AG04450 (cell line): ENCODE measurements at regions of chr5 and their contacts with region 1.

Region 1: DNA sequence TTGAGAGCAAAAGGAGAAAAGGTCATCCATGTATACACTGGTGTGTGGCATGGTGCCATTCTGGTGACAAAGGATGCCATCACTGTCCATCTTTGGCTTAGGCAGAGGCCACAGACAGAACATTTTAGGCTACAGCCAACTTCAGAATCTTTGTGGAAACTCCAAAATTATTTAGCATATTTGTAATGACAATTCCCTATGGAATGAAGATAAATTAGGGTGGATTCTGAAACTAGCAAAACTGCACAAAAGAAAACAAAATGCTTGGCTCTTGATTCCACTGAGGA is 92.5 kb downstream of the FBXW11 start:
- DNase-seq: no peak
- H3K4me3 ChIP-seq: no peak overlapping the region
- H3K27ac ChIP-seq: no peak overlapping the region
- H3K27me3 ChIP-seq: no peaks in the 10 kb centered on the region
- CTCF ChIP-seq: no peak

Region 2: GRCh38 chr5:171630027-171630669 is 283.8 kb before region 1 on chr5:
- CTCF ChIA-PET with region 1: interaction called, 24 read pairs
- POLR2A ChIA-PET with region 1: no interaction called
- DNase-seq: peak; percentile 11
- H3K4me3 ChIP-seq: peak overlapping the region; percentile 33
- H3K27ac ChIP-seq: no peak overlapping the region
- H3K27me3 ChIP-seq: peaks cover 41% of the 10 kb centered on the region
- CTCF ChIP-seq: peak; percentile 69

Region 3: DNA sequence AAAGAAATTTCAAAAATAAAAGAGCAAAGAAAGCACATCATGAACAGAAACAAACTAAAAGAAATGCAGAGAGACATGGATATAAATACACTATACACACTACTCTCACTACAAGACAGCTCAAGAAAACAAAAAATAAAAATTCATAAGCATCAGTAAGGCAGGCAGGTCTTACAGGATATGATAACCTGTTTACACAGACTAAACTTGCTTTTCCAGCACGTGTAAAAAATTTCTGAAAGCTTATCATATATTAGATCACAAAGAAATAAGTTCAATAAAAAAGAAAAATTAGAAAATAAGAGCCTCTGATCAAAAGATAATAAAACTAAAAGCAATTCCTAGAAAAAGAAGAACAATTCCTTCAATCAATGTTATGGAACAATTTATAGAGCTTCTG is 22.6 kb after region 1 on chr5:
- CTCF ChIA-PET with region 1: interaction called, 10 read pairs
- POLR2A ChIA-PET with region 1: no interaction called
- DNase-seq: no peak
- H3K4me3 ChIP-seq: no peak overlapping the region
- H3K27ac ChIP-seq: no peak overlapping the region
- H3K27me3 ChIP-seq: no peaks in the 10 kb centered on the region
- CTCF ChIP-seq: no peak

Region 4: GRCh38 chr5:172044631-172045314 is 130.8 kb after region 1 on chr5:
- CTCF ChIA-PET with region 1: interaction called, 53 read pairs
- POLR2A ChIA-PET with region 1: no interaction called
- DNase-seq: no peak
- H3K4me3 ChIP-seq: no peak overlapping the region
- H3K27ac ChIP-seq: no peak overlapping the region
- H3K27me3 ChIP-seq: no peaks in the 10 kb centered on the region
- CTCF ChIP-seq: no peak

Region 5: DNA sequence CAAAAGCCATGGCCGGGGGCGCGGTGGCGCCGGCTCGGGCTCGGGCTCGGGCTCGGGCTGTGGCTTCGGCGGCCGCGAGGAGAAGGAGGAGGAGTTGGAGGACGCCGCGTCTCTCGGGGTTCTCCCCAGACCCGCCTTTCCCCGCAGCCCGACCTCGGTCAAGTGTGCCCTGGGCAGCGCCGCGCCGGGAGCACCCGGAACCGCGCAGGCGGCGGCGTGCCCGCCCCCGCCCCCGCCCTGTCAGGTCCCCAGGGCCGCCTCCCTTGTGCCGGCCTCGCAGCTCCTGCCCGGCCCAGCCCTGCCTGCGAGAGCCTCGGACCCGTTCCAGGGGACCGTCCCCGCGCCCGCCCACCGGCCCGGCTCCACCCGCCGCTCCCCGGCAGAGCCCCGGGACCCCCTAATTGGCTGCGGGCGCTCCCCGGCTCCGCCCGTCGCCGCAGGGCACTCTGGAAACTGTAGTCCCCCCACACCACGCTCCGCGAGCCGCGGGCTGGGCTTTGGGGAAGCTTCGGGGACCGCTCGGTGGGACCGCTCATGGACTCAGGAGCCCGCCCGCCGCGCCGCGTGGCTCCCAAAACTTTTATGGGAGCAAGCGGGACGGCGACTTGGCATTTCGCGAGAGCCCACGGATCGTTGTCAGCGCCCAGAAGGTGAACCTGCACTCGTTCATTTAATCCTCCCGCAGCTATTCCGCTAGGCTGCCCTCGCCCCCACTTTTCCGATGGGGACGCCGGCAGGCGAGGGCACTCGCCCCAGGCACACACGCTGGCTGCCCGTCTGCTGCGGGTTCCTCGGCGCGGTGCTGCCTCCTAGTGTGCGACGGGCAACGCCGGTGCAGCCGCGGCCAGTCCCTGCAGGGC is 274.3 kb after region 1 on chr5 and contains the start of gene STK10:
- CTCF ChIA-PET with region 1: interaction called, 51 read pairs
- POLR2A ChIA-PET with region 1: no interaction called
- DNase-seq: peak; percentile 67
- H3K4me3 ChIP-seq: peak within 1 kb of the TSS; percentile 93
- H3K27ac ChIP-seq: peak within 1 kb of the TSS; percentile 77
- H3K27me3 ChIP-seq: no peaks in the 10 kb centered on the region
- CTCF ChIP-seq: peak; percentile 81
- polyA plus RNA-seq, gene STK10: 7.8 and 10.8 TPM in 2 replicates